ENCODE measurements at regions of chr2 and their contacts with region 1.

Region 1: GRCh38 chr2:67240507-67240906 is 156.6 kb upstream of the ETAA1 start:
- DNase-seq: peak; percentile 44
- H3K4me3 ChIP-seq: no peak overlapping the region
- H3K27ac ChIP-seq: no peak overlapping the region
- H3K4me1 ChIP-seq: no peaks in the 10 kb centered on the region
- H3K27me3 ChIP-seq: no peaks in the 10 kb centered on the region

Region 2: GRCh38 chr2:67650291-67651133 is 410.0 kb after region 1 on chr2:
- in situ Hi-C with region 1: loop called (anchors 10 kb)
- DNase-seq: peak; percentile 95
- H3K4me3 ChIP-seq: peak overlapping the region; percentile 41
- H3K27ac ChIP-seq: peak overlapping the region; percentile 37
- H3K4me1 ChIP-seq: peaks cover 40% of the 10 kb centered on the region
- H3K27me3 ChIP-seq: no peaks in the 10 kb centered on the region

Measured in GM23248 (cell line).